Dorsolateral prefrontal cortex (tissue), 120 donors: ENCODE measurements at regions of chr16 and their contacts with region 1.

Region 1: DNA sequence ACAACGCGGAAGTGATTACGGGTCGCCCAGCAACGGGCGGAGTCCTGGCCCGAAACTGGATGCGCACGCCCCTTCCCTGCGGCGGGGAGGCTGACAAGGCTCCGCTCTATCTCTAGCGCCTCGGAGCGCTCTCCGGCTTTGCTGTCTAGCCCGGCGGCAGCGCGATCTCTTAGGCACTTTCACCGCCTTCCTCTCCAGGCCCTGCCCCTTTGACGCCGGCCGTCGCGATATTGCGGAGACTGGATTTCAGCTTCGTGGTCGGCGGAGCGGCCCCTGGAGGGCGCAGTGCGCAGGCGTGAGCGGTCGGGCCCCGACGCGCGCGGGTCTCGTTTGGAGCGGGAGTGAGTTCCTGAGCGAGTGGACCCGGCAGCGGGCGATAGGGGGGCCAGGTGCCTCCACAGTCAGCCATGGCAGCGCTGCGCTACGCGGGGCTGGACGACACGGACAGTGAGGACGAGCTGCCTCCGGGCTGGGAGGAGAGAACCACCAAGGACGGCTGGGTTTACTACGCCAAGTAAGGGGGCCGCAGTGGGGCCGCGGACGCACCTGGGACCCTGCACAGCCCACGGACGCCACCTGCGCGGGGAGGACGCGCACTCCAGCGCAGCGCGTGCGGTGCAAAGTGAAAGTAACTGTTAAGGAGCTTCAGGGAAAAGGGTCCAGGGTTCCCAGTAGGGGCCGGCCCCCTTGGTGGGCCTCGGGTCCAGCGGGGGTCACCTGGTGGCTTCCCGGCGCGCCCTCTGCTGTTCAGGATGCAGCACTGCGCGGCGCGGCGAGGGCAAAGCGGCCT is at the start of gene WWOX:
- DNase-seq: peak; percentile 89 to 97 (median 95)
- H3K4me3 ChIP-seq: peak within 1 kb of the TSS; percentile 64 to 100 (median 96)
- H3K27ac ChIP-seq: peak within 1 kb of the TSS; percentile 37 to 98 (median 91)
- H3K27me3 ChIP-seq: no peaks in the 10 kb centered on the region
- CTCF ChIP-seq: peak; percentile 55 to 90 (median 78)
- total RNA-seq, gene WWOX: 20.9 to 71.9 (median 41.3) TPM

Region 2: GRCh38 chr16:78503602-78504001 is 404.0 kb after region 1 on chr16:
- intact Hi-C with region 1: no loop called
- DNase-seq: peak in 4 of 10 donors; percentile 36 to 84 (median 60)
- H3K4me3 ChIP-seq: no peak overlapping the region
- H3K27ac ChIP-seq: peak overlapping the region in 4 of 59 donors; percentile 11 to 61 (median 40)
- H3K27me3 ChIP-seq: no peaks in the 10 kb centered on the region
- CTCF ChIP-seq: peak; percentile 86 to 98 (median 94)

Region 3: DNA sequence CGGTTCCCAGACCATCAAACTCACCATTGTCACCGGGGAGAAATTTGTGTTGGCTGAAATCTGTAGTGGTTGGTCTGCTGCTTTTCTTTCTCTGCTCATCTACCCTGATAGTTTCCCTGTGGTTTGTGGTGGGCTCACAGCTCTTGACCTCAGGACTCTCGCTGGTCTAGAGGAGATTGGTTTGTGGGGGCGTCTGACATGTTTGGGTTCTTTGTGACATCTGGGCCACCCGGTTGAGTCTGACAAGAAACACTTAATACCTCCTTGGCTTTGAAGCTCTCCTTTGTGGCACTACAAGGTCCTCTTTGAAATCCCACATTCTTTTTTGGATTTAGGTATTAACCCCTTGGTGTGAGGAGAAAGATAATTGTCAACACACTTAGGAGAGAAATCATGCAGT is 661.9 kb after region 1 on chr16:
- intact Hi-C with region 1: loop called in 1 of 2 experiments (anchors 10 kb)
- DNase-seq: no peak
- H3K4me3 ChIP-seq: no peak overlapping the region
- H3K27ac ChIP-seq: no peak overlapping the region
- H3K27me3 ChIP-seq: no peaks in the 10 kb centered on the region
- CTCF ChIP-seq: no peak